Naive thymus-derived CD4-positive, alpha-beta T cell (primary cell): ENCODE measurements at regions of chr2 and their contacts with region 1.

Region 1: GRCh38 chr2:191950132-191950874 is 103.4 kb upstream of the CAVIN2 start:
- DNase-seq: no peak
- ATAC-seq: no peak
- H3K4me3 ChIP-seq: no peak overlapping the region
- H3K4me3 Mint-ChIP-seq: no peak overlapping the region
- H3K27ac ChIP-seq: no peak overlapping the region
- H3K27ac Mint-ChIP-seq: no peak overlapping the region
- H3K4me1 ChIP-seq: no peaks in the 10 kb centered on the region
- H3K4me1 Mint-ChIP-seq: no peaks in the 10 kb centered on the region
- H3K27me3 ChIP-seq: peaks cover 0 to 3% of the 10 kb centered on the region in 2 donors
- H3K27me3 Mint-ChIP-seq: peaks cover 0 to 15% (median 10%) of the 10 kb centered on the region in 5 donors

Region 2: GRCh38 chr2:191927319-191927867 is 22.9 kb before region 1 on chr2:
- CTCF ChIA-PET with region 1: no interaction called
- POLR2A ChIA-PET with region 1: no interaction called
- intact Hi-C with region 1: loop called in 1 of 2 experiments (anchors 1 kb)
- DNase-seq: no peak
- ATAC-seq: no peak
- H3K4me3 ChIP-seq: no peak overlapping the region
- H3K4me3 Mint-ChIP-seq: no peak overlapping the region
- H3K27ac ChIP-seq: no peak overlapping the region
- H3K27ac Mint-ChIP-seq: no peak overlapping the region
- H3K4me1 ChIP-seq: no peaks in the 10 kb centered on the region
- H3K4me1 Mint-ChIP-seq: no peaks in the 10 kb centered on the region
- H3K27me3 ChIP-seq: no peaks in the 10 kb centered on the region
- H3K27me3 Mint-ChIP-seq: peaks cover 0 to 17% (median 7%) of the 10 kb centered on the region in 5 donors